ENCODE measurements at regions of chr7 and their contacts with region 1.

Region 1: DNA sequence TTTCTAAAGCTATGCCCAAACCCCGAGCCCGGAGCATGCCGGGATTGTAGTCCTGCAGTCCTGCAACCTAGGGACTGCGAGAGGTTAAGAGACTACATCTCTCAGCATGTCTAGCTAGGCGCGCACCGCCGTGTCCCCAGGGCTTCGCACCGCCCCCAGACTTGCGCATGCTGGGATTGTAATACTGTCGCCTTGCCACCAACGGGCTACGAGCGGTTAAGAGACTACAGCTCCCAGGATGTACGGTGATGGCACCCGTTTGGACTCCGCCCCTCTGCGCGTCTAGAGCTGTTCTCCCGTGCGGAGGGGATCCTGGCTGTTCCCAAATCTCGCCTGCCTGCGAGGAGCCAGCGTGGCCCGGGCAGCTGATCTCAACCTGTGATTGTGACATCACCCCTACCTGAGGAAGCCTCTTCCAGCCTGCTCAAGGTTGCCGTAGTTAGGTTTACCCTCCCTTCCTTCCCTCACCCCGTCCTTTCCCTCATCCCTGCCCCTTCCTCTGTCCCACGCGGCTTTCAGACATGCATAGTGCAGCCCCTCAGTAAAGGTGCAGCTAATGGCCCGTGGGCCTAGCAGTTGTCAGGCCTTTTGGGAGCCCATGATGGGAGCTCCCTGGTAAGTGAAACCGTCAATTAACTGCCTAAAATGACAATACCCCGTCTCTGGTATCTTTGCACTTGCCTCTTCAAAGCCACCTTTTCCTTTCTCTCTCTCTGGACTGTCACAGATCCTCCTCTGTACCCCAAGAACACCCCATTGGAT is 6.3 kb upstream of the ZNF736 start:
- DNase-seq: peak; percentile 87
- ATAC-seq: peak; percentile 93
- H3K4me3 Mint-ChIP-seq: peak overlapping the region; percentile 94
- H3K27ac Mint-ChIP-seq: peak overlapping the region; percentile 98
- H3K4me1 Mint-ChIP-seq: peaks cover 40% of the 10 kb centered on the region
- H3K27me3 Mint-ChIP-seq: no peaks in the 10 kb centered on the region
- CTCF ChIP-seq: no peak

Region 2: DNA sequence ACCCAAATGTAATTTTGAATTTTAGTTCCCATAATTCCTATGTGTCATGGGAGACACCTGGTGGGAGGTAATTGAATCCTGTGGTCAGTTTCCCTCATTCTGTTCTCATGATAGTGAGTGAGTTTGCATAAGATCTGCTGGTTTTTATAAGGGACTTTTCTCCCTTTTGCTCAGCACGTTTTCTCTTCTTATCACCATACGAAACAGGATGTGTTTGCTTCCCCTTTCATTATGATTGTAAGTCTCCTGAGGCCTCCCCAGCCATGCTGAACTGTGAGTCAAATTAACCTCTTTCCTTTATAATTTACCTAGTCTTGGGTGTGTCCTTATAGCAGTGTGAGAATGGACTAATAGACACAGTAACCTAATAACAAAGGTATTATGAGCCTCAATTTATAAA is 29.8 kb before region 1 on chr7:
- CTCF ChIA-PET with region 1: no interaction called
- POLR2A ChIA-PET with region 1: no interaction called
- intact Hi-C with region 1: loop called (anchors 2 kb)
- DNase-seq: no peak
- ATAC-seq: peak; percentile 64
- H3K4me3 Mint-ChIP-seq: no peak overlapping the region
- H3K27ac Mint-ChIP-seq: peak overlapping the region; percentile 2
- H3K4me1 Mint-ChIP-seq: peaks cover 8% of the 10 kb centered on the region
- H3K27me3 Mint-ChIP-seq: no peaks in the 10 kb centered on the region
- CTCF ChIP-seq: no peak

Region 3: GRCh38 chr7:64562626-64563275 is 255.3 kb after region 1 on chr7 and contains the start of gene ZNF680:
- CTCF ChIA-PET with region 1: interaction called, 3 read pairs
- POLR2A ChIA-PET with region 1: interaction called, 16 read pairs
- intact Hi-C with region 1: loop called (anchors 1 kb)
- DNase-seq: peak; percentile 75
- ATAC-seq: peak; percentile 100
- H3K4me3 Mint-ChIP-seq: peak within 1 kb of the TSS; percentile 99
- H3K27ac Mint-ChIP-seq: peak within 1 kb of the TSS; percentile 93
- H3K4me1 Mint-ChIP-seq: peaks cover 28% of the 10 kb centered on the region
- H3K27me3 Mint-ChIP-seq: no peaks in the 10 kb centered on the region
- CTCF ChIP-seq: no peak
- total RNA-seq, gene ZNF680: 17.1 and 22.0 TPM in 2 replicates

Region 4: GRCh38 chr7:64902806-64903721 is 595.6 kb after region 1 on chr7 and contains the start of gene ZNF273:
- CTCF ChIA-PET with region 1: no interaction called
- POLR2A ChIA-PET with region 1: interaction called, 4 read pairs
- intact Hi-C with region 1: loop called (anchors 1 kb)
- DNase-seq: peak; percentile 72
- ATAC-seq: peak; percentile 100
- H3K4me3 Mint-ChIP-seq: peak within 1 kb of the TSS; percentile 97
- H3K27ac Mint-ChIP-seq: peak within 1 kb of the TSS; percentile 91
- H3K4me1 Mint-ChIP-seq: peaks cover 52% of the 10 kb centered on the region
- H3K27me3 Mint-ChIP-seq: no peaks in the 10 kb centered on the region
- CTCF ChIP-seq: no peak
- total RNA-seq, gene ZNF273: 10.6 and 12.3 TPM in 2 replicates

Region 5: DNA sequence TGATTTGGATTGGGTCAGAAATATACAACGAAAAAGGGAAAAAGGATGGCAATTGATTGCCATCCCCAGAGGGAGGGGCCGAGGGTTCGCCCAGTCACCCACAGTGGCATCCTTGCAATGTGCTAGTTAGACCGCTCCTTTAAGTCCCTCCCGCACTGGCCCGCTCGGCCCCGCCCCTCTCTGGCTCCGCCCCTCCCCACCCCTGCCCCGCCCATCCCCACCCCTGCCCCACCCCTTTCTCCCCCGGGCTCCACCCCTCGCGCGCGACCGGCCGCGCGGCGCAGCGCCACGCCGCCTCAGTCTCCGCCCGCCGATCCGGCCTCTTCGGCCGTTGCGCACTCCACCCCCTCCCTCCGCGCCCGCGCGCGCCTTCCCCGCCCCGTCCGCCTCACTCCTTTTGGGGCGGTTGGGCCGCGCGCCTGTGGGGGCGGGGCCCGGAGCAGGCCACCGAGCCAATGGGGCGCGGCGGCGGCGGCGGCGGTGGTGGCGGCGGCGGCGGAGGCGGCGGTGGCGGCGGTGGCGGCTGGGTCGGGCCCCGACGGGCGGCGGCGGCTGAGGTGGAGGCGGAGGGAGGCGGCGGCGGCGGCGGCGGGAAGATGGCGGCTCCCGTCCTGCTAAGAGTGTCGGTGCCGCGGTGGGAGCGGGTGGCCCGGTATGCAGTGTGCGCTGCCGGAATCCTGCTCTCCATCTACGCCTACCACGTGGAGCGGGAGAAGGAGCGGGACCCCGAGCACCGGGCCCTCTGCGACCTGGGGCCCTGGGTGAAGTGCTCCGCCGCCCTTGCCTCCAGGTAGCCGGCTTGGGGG is 1565.5 kb after region 1 on chr7 and contains the start of gene VKORC1L1:
- CTCF ChIA-PET with region 1: no interaction called
- POLR2A ChIA-PET with region 1: no interaction called
- intact Hi-C with region 1: loop called (anchors 5 kb)
- DNase-seq: peak; percentile 91
- ATAC-seq: peak; percentile 94
- H3K4me3 Mint-ChIP-seq: peak within 1 kb of the TSS; percentile 82
- H3K27ac Mint-ChIP-seq: peak within 1 kb of the TSS; percentile 50
- H3K4me1 Mint-ChIP-seq: peaks cover 8% of the 10 kb centered on the region
- H3K27me3 Mint-ChIP-seq: no peaks in the 10 kb centered on the region
- CTCF ChIP-seq: no peak
- total RNA-seq, gene VKORC1L1: 8.6 and 9.3 TPM in 2 replicates

Region 6: GRCh38 chr7:66204822-66205740 is 1897.6 kb after region 1 on chr7 and contains the start of gene TPST1:
- CTCF ChIA-PET with region 1: no interaction called
- POLR2A ChIA-PET with region 1: no interaction called
- intact Hi-C with region 1: loop called (anchors 5 kb)
- DNase-seq: peak; percentile 92
- ATAC-seq: peak; percentile 93
- H3K4me3 Mint-ChIP-seq: peak within 1 kb of the TSS; percentile 94
- H3K27ac Mint-ChIP-seq: peak within 1 kb of the TSS; percentile 85
- H3K4me1 Mint-ChIP-seq: peaks cover 43% of the 10 kb centered on the region
- H3K27me3 Mint-ChIP-seq: peaks cover 11% of the 10 kb centered on the region
- CTCF ChIP-seq: no peak
- total RNA-seq, gene TPST1: 5.6 and 6.5 TPM in 2 replicates